ENCODE measurements at regions of chr22 and their contacts with region 1.

Region 1: GRCh38 chr22:20319745-20320658 is at the start of gene DGCR6L:
- DNase-seq: peak; percentile 96
- H3K4me3 Mint-ChIP-seq: peak within 1 kb of the TSS; percentile 93
- H3K27ac Mint-ChIP-seq: peak within 1 kb of the TSS; percentile 70
- H3K4me1 Mint-ChIP-seq: peaks cover 41% of the 10 kb centered on the region
- H3K27me3 Mint-ChIP-seq: no peaks in the 10 kb centered on the region
- total RNA-seq, gene DGCR6L: 29.0 and 31.1 TPM in 2 replicates

Region 2: GRCh38 chr22:20039683-20040325 is 280.2 kb before region 1 on chr22:
- intact Hi-C with region 1: no loop called
- DNase-seq: no peak
- H3K4me3 Mint-ChIP-seq: no peak overlapping the region
- H3K27ac Mint-ChIP-seq: no peak overlapping the region
- H3K4me1 Mint-ChIP-seq: peaks cover 3% of the 10 kb centered on the region
- H3K27me3 Mint-ChIP-seq: no peaks in the 10 kb centered on the region

Region 3: GRCh38 chr22:20298803-20299735 is 20.9 kb before region 1 on chr22:
- intact Hi-C with region 1: loop called (anchors 2 kb)
- DNase-seq: peak; percentile 87
- H3K4me3 Mint-ChIP-seq: peak overlapping the region; percentile 79
- H3K27ac Mint-ChIP-seq: no peak overlapping the region
- H3K4me1 Mint-ChIP-seq: peaks cover 2% of the 10 kb centered on the region
- H3K27me3 Mint-ChIP-seq: peaks cover 26% of the 10 kb centered on the region

Measured in activated T-helper 2 cell treated with anti-CD3 and anti-CD28 coated beads, Interferon-gamma antibody, Interleukin-2, Interleukin-4, amounts not matched to agents 10 μg/mL and 5 μg/mL and 100 μg/mL, durations not matched to agents 14 hours and 24 hours and 36 hours (primary cell).